ENCODE measurements at regions of chr22 and their contacts with region 1.

Region 1: GRCh38 chr22:30423982-30424963 is 1.3 kb upstream of the MTFP1 start:
- DNase-seq: peak; percentile 99
- ATAC-seq: peak; percentile 80 to 89
- H3K4me3 ChIP-seq: peak overlapping the region; percentile 60 to 96 (median 78)
- H3K27ac ChIP-seq: peak overlapping the region; percentile 92 to 100 (median 99)
- H3K4me1 ChIP-seq: peaks cover 31 to 32% of the 10 kb centered on the region in 2 donors
- H3K27me3 ChIP-seq: no peaks in the 10 kb centered on the region
- CTCF ChIP-seq: no peak
- POLR2A ChIP-seq: peak in 1 of 2 donors; percentile 73

Region 2: DNA sequence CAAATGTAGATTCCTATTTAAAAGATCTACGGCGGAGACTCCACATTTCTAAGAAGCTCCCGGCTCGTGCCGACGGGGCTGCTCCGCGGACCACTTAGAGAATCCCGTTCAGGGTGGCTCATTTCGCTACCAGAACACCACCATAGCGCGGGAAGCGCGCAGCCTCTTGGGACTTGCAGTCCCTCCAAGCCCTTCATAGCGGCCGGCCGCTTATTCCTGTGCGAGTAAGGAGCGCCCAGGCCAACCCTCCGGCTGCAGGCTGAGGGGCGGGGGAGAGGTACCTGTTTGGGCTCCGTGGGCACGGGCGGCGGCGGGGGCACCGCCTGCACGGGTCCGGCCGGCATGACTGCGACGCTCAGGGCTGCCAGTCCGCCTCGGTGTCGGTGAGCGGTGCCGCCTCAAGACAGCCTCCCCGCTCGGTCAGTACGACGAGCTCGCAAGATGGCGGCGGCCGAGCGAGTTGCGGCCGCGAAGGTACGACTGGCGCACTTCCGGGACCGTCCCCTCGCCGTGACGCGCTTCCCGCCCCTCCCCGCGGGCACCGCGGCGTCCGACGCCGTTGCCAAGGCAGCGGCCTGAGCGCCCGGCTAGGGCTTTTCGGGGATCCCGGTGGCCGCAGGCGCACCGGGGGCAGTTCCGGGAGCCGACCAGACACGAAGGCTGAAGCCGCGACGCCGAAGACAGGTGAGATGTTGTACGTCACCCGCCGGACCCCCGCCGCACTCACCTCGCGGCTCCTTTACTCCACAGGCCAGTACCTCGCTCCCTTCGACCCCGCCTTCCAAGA is 67.6 kb before region 1 on chr22 and contains the starts of genes CCDC157 and SF3A1:
- in situ Hi-C with region 1: no loop called
- intact Hi-C with region 1: loop called (anchors 1 kb)
- DNase-seq: peak; percentile 75 to 81
- ATAC-seq: peak; percentile 98
- H3K4me3 ChIP-seq: peak within 1 kb of the TSS; percentile 78 to 98 (median 92)
- H3K27ac ChIP-seq: peak within 1 kb of the TSS; percentile 93 to 97 (median 94)
- H3K4me1 ChIP-seq: peaks cover 23 to 32% of the 10 kb centered on the region in 2 donors
- H3K27me3 ChIP-seq: no peaks in the 10 kb centered on the region
- CTCF ChIP-seq: no peak
- POLR2A ChIP-seq: peak; percentile 85 to 86
- total RNA-seq, gene CCDC157: 0.41 to 1.4 (median 1.1) TPM
- total RNA-seq, gene SF3A1: 36.0 to 145 (median 94.5) TPM

Region 3: DNA sequence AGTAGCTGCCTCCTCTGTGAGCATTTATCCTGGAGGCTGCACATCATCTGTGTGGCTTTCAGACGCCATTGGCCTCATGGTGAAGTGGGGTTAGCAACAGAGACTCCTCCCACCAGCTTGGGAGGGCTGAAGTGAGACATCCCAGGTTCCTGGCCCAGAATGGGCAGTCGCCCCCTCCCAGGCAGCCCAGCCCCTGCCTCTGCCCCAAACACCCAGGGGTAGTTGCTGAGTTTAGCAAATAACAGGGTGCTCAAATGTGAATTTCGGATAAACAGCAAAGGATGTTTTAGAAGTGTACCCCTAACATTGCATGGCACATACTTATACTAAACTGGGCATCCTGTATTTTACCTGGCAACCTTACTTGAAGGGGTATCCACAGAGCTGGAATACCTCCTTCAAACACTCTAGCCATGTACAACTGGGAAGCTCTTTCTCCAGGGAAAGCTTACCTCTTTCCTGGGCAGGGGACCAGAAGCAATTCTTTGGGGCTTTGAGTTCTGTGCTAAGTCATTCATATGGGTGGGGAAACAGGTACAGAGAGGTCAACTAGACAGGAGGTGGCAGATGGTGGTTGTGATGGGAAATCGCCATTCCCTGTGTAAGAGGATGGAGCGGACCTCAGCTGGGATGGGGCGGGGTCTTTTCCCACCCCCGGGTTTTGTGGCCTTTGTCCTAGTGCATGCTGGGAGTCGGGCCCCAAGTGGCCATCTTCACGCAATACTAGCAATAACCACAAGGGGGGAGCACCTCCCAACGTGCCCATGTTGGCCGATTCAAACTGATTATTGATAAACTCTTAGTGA is 20.6 kb after region 1 on chr22:
- in situ Hi-C with region 1: no loop called
- intact Hi-C with region 1: no loop called
- DNase-seq: no peak
- ATAC-seq: peak in 1 of 2 donors; percentile 33
- H3K4me3 ChIP-seq: no peak overlapping the region
- H3K27ac ChIP-seq: no peak overlapping the region
- H3K4me1 ChIP-seq: no peaks in the 10 kb centered on the region
- H3K27me3 ChIP-seq: peaks cover 0 to 3% (median 0%) of the 10 kb centered on the region in 3 donors
- CTCF ChIP-seq: peak; percentile 14 to 68 (median 53)
- POLR2A ChIP-seq: no peak

Region 4: GRCh38 chr22:30694171-30694639 is 269.9 kb after region 1 on chr22:
- in situ Hi-C with region 1: no loop called
- intact Hi-C with region 1: loop called (anchors 10 kb)
- DNase-seq: peak; percentile 25 to 40
- ATAC-seq: peak; percentile 70 to 71
- H3K4me3 ChIP-seq: peak overlapping the region; percentile 53 to 75 (median 67)
- H3K27ac ChIP-seq: peak overlapping the region; percentile 48 to 86 (median 74)
- H3K4me1 ChIP-seq: peaks cover 5 to 7% of the 10 kb centered on the region in 2 donors
- H3K27me3 ChIP-seq: no peaks in the 10 kb centered on the region
- CTCF ChIP-seq: no peak
- POLR2A ChIP-seq: no peak

Region 5: DNA sequence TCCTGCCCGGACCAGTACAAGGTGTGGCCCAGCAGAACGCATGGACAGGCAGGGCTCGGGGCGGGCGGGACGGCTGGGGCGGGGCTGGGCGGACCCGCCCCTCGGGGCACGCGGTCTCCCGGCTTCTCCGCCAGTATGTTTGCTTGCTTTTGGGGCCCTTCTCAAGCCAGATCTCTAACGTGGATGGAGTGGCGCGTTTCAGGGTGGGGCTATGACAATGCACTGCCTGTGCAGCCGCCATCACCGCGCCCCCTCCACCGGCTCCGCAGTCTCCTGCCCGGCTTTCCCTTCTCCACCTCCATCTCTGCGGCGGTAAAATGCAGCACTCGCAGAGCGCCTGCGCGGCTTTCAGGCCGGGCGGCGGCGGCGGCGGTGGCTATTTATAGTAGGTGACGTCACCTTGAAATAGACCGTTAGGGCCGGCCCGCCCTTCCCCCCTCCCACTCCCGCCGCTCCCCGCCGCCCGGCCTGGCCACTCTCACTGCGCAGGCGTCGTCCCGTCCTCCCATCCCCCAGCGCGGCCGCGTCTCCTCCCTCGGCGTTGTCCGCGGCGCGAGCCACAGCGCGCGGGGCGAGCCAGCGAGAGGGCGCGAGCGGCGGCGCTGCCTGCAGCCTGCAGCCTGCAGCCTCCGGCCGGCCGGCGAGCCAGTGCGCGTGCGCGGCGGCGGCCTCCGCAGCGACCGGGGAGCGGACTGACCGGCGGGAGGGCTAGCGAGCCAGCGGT is 1519.9 kb after region 1 on chr22 and contains the start of gene YWHAH:
- in situ Hi-C with region 1: no loop called
- intact Hi-C with region 1: loop called (anchors 5 kb)
- DNase-seq: peak; percentile 94 to 95
- ATAC-seq: peak; percentile 90 to 91
- H3K4me3 ChIP-seq: peak within 1 kb of the TSS; percentile 63 to 94 (median 80)
- H3K27ac ChIP-seq: peak within 1 kb of the TSS; percentile 86 to 97 (median 94)
- H3K4me1 ChIP-seq: peaks cover 9 to 19% of the 10 kb centered on the region in 2 donors
- H3K27me3 ChIP-seq: no peaks in the 10 kb centered on the region
- CTCF ChIP-seq: peak in 1 of 5 experiments; percentile 19
- POLR2A ChIP-seq: peak; percentile 95 to 96
- total RNA-seq, gene YWHAH: 26.6 to 65.8 (median 45.7) TPM

Measured in gastrocnemius medialis (tissue), 4 donors.